Naive thymus-derived CD4-positive, alpha-beta T cell (primary cell): ENCODE measurements at regions of chr2 and their contacts with region 1.

Region 1: DNA sequence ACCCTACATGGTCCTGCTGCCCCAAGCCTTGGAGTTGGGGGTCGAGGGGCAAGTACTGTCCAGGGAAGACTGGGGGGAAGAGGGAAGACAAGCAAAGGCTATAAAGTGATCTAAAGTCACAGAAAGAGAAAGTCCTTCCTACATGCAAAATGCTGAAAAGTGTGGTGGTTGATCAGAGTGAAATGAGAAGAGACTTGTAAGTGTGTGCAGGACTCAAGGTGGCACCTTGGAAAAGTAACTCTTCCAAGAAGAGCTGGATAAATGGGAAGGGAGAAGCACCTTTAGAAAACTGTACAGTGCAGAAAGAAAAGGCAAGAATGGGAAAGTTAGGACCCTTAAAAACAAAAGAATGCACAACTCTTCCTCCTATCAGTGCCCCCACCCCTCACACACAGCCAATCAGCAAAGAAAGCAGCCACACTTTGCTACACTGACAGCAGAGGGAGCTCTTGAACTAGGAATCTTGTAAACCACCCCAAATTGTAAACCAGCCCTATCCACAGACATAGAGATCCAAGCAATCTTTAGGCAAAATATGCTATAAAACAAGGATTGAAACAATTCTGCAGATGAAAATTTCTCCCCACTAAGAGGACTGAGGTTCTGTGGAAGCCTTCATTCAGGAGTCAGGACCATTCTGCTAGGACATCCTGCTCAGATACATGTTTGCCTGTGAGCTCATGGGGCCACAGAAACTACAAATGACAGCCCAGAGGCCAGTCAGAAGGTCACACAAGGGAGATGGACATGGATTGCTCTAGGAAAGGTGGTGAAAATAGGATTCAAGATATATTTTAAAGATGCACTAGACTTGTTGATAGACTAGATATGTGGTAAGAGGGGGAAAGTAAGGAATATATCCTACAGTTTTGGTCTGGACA is 146.4 kb downstream of the FTCDNL1 start:
- DNase-seq: peak in 5 of 9 donors; percentile 5 to 27 (median 9)
- ATAC-seq: peak; percentile 74
- H3K4me3 ChIP-seq: no peak overlapping the region
- H3K4me3 Mint-ChIP-seq: no peak overlapping the region
- H3K27ac ChIP-seq: no peak overlapping the region
- H3K27ac Mint-ChIP-seq: no peak overlapping the region
- H3K4me1 ChIP-seq: no peaks in the 10 kb centered on the region
- H3K4me1 Mint-ChIP-seq: peaks cover 0 to 5% (median 0%) of the 10 kb centered on the region in 7 donors
- H3K27me3 ChIP-seq: no peaks in the 10 kb centered on the region
- H3K27me3 Mint-ChIP-seq: peaks cover 0 to 7% (median 5%) of the 10 kb centered on the region in 5 donors

Region 2: GRCh38 chr2:199596549-199596948 is 108.0 kb before region 1 on chr2:
- CTCF ChIA-PET with region 1: no interaction called
- POLR2A ChIA-PET with region 1: no interaction called
- intact Hi-C with region 1: no loop called
- DNase-seq: no peak
- ATAC-seq: peak; percentile 38
- H3K4me3 ChIP-seq: no peak overlapping the region
- H3K4me3 Mint-ChIP-seq: no peak overlapping the region
- H3K27ac ChIP-seq: no peak overlapping the region
- H3K27ac Mint-ChIP-seq: no peak overlapping the region
- H3K4me1 ChIP-seq: no peaks in the 10 kb centered on the region
- H3K4me1 Mint-ChIP-seq: no peaks in the 10 kb centered on the region
- H3K27me3 ChIP-seq: no peaks in the 10 kb centered on the region
- H3K27me3 Mint-ChIP-seq: peaks cover 9 to 17% (median 16%) of the 10 kb centered on the region in 5 donors

Region 3: GRCh38 chr2:199716807-199717586 is 12.4 kb after region 1 on chr2:
- CTCF ChIA-PET with region 1: no interaction called
- POLR2A ChIA-PET with region 1: no interaction called
- intact Hi-C with region 1: no loop called
- DNase-seq: no peak
- ATAC-seq: no peak
- H3K4me3 ChIP-seq: no peak overlapping the region
- H3K4me3 Mint-ChIP-seq: no peak overlapping the region
- H3K27ac ChIP-seq: no peak overlapping the region
- H3K27ac Mint-ChIP-seq: no peak overlapping the region
- H3K4me1 ChIP-seq: no peaks in the 10 kb centered on the region
- H3K4me1 Mint-ChIP-seq: no peaks in the 10 kb centered on the region
- H3K27me3 ChIP-seq: no peaks in the 10 kb centered on the region
- H3K27me3 Mint-ChIP-seq: peaks cover 0 to 17% (median 8%) of the 10 kb centered on the region in 5 donors

Region 4: GRCh38 chr2:199739413-199740110 is 35.0 kb after region 1 on chr2:
- CTCF ChIA-PET with region 1: no interaction called
- POLR2A ChIA-PET with region 1: no interaction called
- intact Hi-C with region 1: loop called (anchors 2 kb)
- DNase-seq: peak in 8 of 9 donors; percentile 13 to 57 (median 34)
- ATAC-seq: peak; percentile 73
- H3K4me3 ChIP-seq: no peak overlapping the region
- H3K4me3 Mint-ChIP-seq: peak overlapping the region in 2 of 10 donors; percentile 8 to 10
- H3K27ac ChIP-seq: no peak overlapping the region
- H3K27ac Mint-ChIP-seq: no peak overlapping the region
- H3K4me1 ChIP-seq: no peaks in the 10 kb centered on the region
- H3K4me1 Mint-ChIP-seq: peaks cover 0 to 7% (median 5%) of the 10 kb centered on the region in 7 donors
- H3K27me3 ChIP-seq: no peaks in the 10 kb centered on the region
- H3K27me3 Mint-ChIP-seq: peaks cover 6 to 32% (median 19%) of the 10 kb centered on the region in 5 donors

Region 5: DNA sequence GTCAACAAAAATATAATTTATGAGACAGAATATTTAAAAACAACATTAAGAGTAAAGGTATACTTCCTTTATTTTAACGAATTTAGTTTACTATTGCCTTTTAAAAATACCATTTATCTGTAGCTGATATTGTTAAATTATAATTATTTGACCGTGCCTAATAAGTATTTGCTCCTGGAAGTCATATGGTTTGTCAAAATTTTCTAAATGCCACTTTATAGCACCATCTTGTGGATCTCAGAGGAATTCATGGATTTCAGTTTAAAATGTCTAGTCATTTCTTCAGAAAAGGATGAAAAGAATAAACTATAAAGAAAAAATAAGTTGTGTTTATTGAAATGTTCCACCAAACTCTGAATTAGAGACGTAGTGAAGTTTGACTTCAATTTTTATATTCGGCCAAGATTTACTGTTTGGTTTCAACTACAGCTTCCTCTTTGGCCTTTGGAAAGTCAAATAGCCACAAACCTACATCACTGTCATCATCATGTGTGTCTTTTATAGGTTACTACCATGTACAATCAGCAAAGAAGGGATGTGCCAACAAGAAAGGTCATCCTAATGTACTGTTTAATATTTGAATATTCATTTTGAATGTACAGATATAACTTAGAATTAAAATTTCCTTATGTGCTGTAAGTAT is 156.7 kb after region 1 on chr2:
- CTCF ChIA-PET with region 1: no interaction called
- POLR2A ChIA-PET with region 1: no interaction called
- intact Hi-C with region 1: loop called in 1 of 2 experiments (anchors 1 kb)
- DNase-seq: peak in 1 of 9 donors; percentile 3
- ATAC-seq: peak; percentile 42
- H3K4me3 ChIP-seq: no peak overlapping the region
- H3K4me3 Mint-ChIP-seq: no peak overlapping the region
- H3K27ac ChIP-seq: no peak overlapping the region
- H3K27ac Mint-ChIP-seq: no peak overlapping the region
- H3K4me1 ChIP-seq: no peaks in the 10 kb centered on the region
- H3K4me1 Mint-ChIP-seq: no peaks in the 10 kb centered on the region
- H3K27me3 ChIP-seq: no peaks in the 10 kb centered on the region
- H3K27me3 Mint-ChIP-seq: peaks cover 6 to 57% (median 17%) of the 10 kb centered on the region in 5 donors

Region 6: DNA sequence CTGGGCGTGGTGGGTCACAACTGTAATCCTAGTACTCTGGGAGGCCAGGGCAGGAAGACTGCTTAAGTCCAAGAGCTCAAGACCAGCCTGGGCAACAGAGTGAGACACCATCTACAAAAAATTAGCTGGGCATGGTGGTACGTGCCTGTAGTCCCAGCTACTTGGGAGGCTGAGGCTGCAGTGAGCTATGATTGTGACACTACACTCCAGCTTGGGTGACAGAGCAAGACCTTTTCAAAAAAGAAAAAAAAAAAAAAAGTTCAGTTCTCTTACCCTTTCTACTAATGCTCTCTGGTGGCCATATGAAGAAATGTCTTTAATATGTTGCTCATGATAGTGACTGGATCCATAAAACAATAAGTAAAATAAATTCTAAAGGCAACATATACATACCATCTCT is 235.8 kb after region 1 on chr2:
- CTCF ChIA-PET with region 1: no interaction called
- POLR2A ChIA-PET with region 1: no interaction called
- intact Hi-C with region 1: loop called in 1 of 2 experiments (anchors 5 kb)
- DNase-seq: peak in 3 of 9 donors; percentile 9 to 18 (median 11)
- ATAC-seq: no peak
- H3K4me3 ChIP-seq: no peak overlapping the region
- H3K4me3 Mint-ChIP-seq: no peak overlapping the region
- H3K27ac ChIP-seq: no peak overlapping the region
- H3K27ac Mint-ChIP-seq: no peak overlapping the region
- H3K4me1 ChIP-seq: no peaks in the 10 kb centered on the region
- H3K4me1 Mint-ChIP-seq: peaks cover 0 to 19% (median 14%) of the 10 kb centered on the region in 7 donors
- H3K27me3 ChIP-seq: no peaks in the 10 kb centered on the region
- H3K27me3 Mint-ChIP-seq: no peaks in the 10 kb centered on the region